SK-N-SH (cell line): ENCODE measurements at regions of chr1 and their contacts with region 1.

Region 1: DNA sequence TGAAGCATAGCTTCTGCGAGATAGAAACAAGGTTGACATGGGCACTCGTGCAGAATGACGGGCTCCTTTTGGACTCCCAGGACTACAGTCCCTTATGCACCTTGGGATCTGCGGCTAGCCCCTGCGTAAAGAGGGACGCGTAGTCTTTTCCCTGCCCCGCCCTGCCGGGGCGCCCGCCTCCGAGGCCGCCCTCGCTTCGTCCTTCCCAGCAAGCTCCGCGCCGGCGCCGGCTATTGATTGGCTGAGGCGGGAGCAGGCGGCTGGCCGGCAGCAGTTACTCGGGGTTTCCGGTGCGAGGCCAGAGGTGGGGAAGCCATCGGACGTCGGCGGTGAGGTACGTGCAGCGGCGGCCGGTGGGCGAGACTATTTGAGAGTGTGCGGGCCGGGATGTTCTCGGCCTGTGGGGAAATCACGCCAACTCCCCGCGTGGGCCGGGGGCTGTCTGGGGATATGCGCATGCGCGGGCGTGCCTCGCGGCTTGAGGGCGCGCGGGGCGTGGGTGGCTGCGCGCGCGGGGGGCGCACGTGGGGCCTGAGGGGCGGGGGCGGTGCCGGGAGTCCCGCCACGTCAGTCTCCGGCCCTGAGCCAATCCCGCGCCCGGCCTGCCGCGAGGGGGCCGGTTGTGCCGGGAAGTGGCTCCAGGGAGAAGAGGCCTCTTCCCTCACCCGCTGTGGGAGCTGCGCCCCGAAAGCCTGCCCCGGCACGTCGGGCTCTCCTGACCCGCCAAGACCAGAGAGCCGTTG is at the start of gene TXLNA:
- DNase-seq: peak; percentile 98
- H3K4me3 ChIP-seq: peak within 1 kb of the TSS; percentile 65 to 82
- H3K27ac ChIP-seq: peak within 1 kb of the TSS; percentile 90 to 96
- H3K4me1 ChIP-seq: peaks cover 18 to 25% of the 10 kb centered on the region in 2 experiments; a peak in 3 of 4 replicates
- H3K27me3 ChIP-seq: no peaks in the 10 kb centered on the region
- CTCF ChIP-seq: no peak; the same call in 1 of the 2 replicates
- EP300 ChIP-seq: no peak
- RAD21 ChIP-seq: no peak
- polyA plus RNA-seq, gene TXLNA: 26.4 and 32.7 TPM in 2 replicates

Region 2: GRCh38 chr1:32072622-32073298 is 106.9 kb before region 1 on chr1 and contains the start of gene TMEM39B:
- CTCF ChIA-PET with region 1: no interaction called
- POLR2A ChIA-PET with region 1: interaction called, 16 read pairs
- DNase-seq: peak; percentile 97
- H3K4me3 ChIP-seq: peak within 1 kb of the TSS; percentile 65 to 71
- H3K27ac ChIP-seq: peak within 1 kb of the TSS; percentile 84 to 93
- H3K4me1 ChIP-seq: peaks cover 13 to 27% of the 10 kb centered on the region in 2 experiments
- H3K27me3 ChIP-seq: no peaks in the 10 kb centered on the region
- CTCF ChIP-seq: no peak
- EP300 ChIP-seq: peak in 1 of 2 experiments; percentile 14; a peak in 1 of 4 replicates
- RAD21 ChIP-seq: no peak
- polyA plus RNA-seq, gene TMEM39B: 24.4 and 25.1 TPM in 2 replicates

Region 3: GRCh38 chr1:32200226-32201010 is 20.8 kb after region 1 on chr1 and contains the start of gene CCDC28B:
- CTCF ChIA-PET with region 1: interaction called, 3 read pairs
- POLR2A ChIA-PET with region 1: interaction called, 19 read pairs
- DNase-seq: peak; percentile 86
- H3K4me3 ChIP-seq: peak within 1 kb of the TSS; percentile 69 to 75
- H3K27ac ChIP-seq: peak within 1 kb of the TSS; percentile 77 to 91
- H3K4me1 ChIP-seq: peaks cover 22 to 36% of the 10 kb centered on the region in 2 experiments; a peak in 3 of 4 replicates
- H3K27me3 ChIP-seq: no peaks in the 10 kb centered on the region
- CTCF ChIP-seq: no peak
- EP300 ChIP-seq: no peak
- RAD21 ChIP-seq: no peak
- polyA plus RNA-seq, gene CCDC28B: 18.8 and 26.3 TPM in 2 replicates

Region 4: DNA sequence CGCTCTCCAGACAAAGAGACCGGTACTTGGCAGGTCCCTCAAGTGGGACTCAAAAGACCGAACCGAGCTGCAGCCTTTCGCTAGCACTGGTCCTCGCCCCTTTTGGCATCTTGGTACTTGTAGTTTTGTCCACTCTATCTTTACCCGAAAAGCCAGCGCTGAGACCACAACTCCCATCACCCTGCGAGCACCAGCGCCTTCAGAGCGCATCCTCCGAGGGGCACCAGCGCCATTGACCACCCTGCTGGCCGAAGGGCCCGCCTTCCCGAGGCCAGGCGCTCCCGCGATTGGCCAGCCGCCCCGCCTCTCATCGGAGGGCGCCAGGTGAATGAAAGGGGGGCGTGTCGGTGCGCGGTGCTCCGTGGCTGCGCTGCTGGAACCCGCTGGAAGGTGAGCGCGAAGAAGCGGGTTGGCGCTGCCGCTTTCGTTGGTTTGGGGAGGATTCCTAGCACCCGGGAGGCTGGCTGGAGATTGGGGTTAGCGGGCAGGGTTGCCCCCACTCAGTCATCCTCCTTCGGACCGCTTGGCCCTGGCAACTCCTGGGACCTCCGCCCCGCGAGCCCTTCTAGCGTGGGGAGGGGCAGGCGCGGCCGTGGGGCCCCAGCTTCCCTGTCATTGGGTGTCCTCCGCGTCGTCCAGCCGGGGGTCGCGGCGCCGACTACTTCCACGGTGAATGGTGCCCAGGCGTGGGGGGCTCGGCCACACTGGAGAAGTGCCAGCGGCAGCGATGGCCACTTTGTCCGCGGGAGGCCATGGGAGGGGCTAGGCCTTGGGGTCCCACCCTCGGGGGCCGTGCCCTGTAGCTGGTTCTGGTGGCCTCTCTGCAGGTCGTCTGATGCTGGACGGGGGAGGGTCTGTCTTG is 285.3 kb after region 1 on chr1 and contains the start of gene ZBTB8B:
- CTCF ChIA-PET with region 1: no interaction called
- POLR2A ChIA-PET with region 1: no interaction called
- DNase-seq: peak; percentile 99
- H3K4me3 ChIP-seq: peak within 1 kb of the TSS; percentile 67 to 87
- H3K27ac ChIP-seq: peak within 1 kb of the TSS in 1 of 2 experiments; percentile 61; a peak in 2 of 4 replicates
- H3K4me1 ChIP-seq: peaks cover 0 to 6% of the 10 kb centered on the region in 2 experiments; a peak in 1 of 4 replicates
- H3K27me3 ChIP-seq: no peaks in the 10 kb centered on the region; the same call in 1 of the 2 replicates
- CTCF ChIP-seq: no peak
- EP300 ChIP-seq: no peak
- RAD21 ChIP-seq: no peak
- polyA plus RNA-seq, gene ZBTB8B: 0.08 and 0.16 TPM in 2 replicates